PC-3 (cell line): ENCODE measurements at regions of chr3 and their contacts with region 1.

Region 1: DNA sequence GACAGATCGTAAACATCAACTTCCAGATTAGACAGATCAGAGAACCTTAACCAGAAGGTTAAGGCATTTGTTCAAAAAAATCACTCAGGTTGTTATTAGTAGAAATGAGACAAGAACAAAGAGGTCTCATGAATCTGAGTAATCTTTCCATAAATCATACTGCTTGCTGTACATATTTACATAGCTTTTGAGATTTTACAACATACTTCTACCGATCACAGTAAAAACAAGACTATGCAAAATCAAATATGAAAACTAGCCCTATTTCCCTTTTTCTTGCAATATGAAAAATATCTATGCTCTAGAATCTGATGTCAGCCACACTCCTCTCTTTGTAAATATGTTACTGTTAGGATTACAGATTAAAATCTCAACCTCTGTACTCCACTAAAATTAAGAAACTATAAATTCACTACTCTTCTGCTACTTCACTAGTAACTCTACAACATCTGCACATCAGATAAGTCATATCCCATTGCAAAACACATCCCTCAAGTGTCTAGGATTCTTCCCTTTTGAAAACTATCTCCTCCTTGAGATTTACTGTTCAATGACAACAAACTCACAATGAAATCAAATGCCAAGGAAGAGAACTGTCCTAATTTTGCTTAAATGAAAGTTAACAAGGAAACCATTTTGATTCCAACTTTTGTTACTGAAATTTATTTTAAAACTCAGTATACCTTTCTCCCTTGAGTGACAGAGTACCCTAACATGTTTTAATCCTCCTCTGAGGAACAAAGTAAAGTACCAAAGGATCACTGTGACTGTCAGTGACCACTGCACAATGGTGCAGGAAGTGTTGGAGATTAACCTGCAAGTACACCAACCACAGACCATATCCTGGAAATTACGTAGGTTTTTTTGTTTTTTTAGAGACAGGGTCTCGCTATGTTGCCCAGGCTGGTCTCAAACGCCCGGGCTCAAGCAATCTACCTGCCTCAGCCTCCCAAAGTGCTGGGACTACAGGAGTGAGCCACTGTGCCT is 12.8 kb downstream of the DCUN1D1 start:
- DNase-seq: no peak
- ATAC-seq: peak; percentile 77
- H3K4me3 ChIP-seq: no peak overlapping the region
- H3K27ac ChIP-seq: peak overlapping the region; percentile 8; the same call in 1 of the 2 replicates
- H3K4me1 ChIP-seq: peaks cover 43% of the 10 kb centered on the region
- H3K27me3 ChIP-seq: no peaks in the 10 kb centered on the region
- CTCF ChIP-seq: no peak

Region 2: DNA sequence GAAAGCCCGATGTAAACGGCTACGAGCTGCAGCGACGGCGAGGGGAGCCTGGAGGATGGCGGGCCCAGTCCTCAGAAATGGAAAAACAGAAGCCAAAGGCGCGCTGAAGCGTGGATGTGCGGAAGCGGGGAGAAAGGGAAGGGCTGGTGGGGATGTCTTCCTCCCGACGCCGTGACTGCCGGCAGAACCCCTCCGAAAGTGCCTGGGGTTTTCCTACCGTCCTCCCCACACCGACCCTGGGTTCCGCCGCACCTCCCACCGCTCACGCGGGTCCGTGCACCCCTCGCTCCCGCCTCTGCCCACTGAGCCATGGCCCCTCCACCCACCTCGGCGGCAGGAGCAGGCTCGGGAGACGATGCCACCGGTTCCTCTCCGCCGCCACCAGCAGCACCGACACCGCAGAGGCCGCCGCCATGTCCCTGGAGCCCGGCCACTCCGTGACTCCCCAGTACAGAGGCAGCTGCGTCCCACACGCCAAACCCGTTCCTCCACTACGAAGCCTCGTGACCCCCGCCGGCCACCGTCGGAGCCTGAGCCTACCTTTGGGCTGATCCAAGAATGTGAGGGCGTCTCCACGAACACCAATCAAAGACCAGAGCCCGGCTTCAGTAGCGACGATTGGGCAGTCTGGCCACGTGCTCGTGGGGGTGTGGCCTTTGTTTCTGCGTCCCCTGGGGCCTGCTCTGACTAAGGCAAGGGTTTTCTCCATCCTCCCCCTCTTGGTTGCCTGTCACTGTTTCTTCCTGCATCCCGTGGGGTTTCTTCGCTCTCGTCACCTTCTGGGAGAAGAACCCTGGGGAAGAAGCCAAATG is 131.7 kb after region 1 on chr3 and contains the start of gene MCCC1:
- CTCF ChIA-PET with region 1: no interaction called
- POLR2A ChIA-PET with region 1: no interaction called
- intact Hi-C with region 1: loop called (anchors 5 kb)
- DNase-seq: peak; percentile 97
- ATAC-seq: peak; percentile 91
- H3K4me3 ChIP-seq: peak within 1 kb of the TSS; percentile 82
- H3K27ac ChIP-seq: peak within 1 kb of the TSS; percentile 79
- H3K4me1 ChIP-seq: peaks cover 30% of the 10 kb centered on the region
- H3K27me3 ChIP-seq: no peaks in the 10 kb centered on the region
- CTCF ChIP-seq: no peak
- total RNA-seq, gene MCCC1: 18.5 and 26.3 TPM in 2 replicates